Activated T-helper 1 cell treated with anti-CD3 and anti-CD28 coated beads, Interleukin-12 subunit alpha, Interleukin-12 subunit beta, Interleukin-2, Interleukin-4 antibody, amounts not matched to agents 30 ng/mL and 10 ng/mL and 1 ng/mL, durations not matched to agents 14 hours and 24 hours and 36 hours (primary cell): ENCODE measurements at regions of chr6 and their contacts with region 1.

Region 1: GRCh38 chr6:15911753-15912504 is 217.0 kb upstream of the MYLIP start:
- DNase-seq: peak; percentile 15
- H3K4me3 Mint-ChIP-seq: no peak overlapping the region
- H3K27ac Mint-ChIP-seq: peak overlapping the region; percentile 24
- H3K4me1 Mint-ChIP-seq: peaks cover 13% of the 10 kb centered on the region
- H3K27me3 Mint-ChIP-seq: no peaks in the 10 kb centered on the region

Region 2: DNA sequence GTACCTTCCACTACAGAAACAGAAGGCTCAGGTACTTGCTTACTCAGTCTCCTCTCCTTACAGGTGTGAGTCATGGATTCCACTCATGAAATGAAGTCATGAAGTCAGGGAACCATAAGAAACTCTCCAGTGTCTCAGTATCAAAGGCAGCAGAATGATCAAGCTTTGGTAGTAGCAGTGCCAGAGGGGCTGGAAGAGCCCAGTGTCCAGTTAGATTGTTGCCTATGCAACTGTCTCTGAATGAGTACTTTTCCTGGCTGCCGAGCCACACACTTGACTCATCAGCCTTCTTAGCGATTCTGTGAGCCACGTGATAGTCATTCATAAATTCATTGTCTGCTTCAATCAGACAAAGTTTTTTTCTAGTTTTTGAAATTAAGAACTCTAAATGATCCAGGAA is 196.9 kb before region 1 on chr6:
- intact Hi-C with region 1: loop called (anchors 5 kb)
- DNase-seq: no peak
- H3K4me3 Mint-ChIP-seq: no peak overlapping the region
- H3K27ac Mint-ChIP-seq: peak overlapping the region; percentile 45
- H3K4me1 Mint-ChIP-seq: peaks cover 11% of the 10 kb centered on the region
- H3K27me3 Mint-ChIP-seq: no peaks in the 10 kb centered on the region

Region 3: GRCh38 chr6:15796130-15796771 is 115.7 kb before region 1 on chr6:
- intact Hi-C with region 1: no loop called
- DNase-seq: no peak
- H3K4me3 Mint-ChIP-seq: no peak overlapping the region
- H3K27ac Mint-ChIP-seq: no peak overlapping the region
- H3K4me1 Mint-ChIP-seq: no peaks in the 10 kb centered on the region
- H3K27me3 Mint-ChIP-seq: peaks cover 2% of the 10 kb centered on the region

Region 4: DNA sequence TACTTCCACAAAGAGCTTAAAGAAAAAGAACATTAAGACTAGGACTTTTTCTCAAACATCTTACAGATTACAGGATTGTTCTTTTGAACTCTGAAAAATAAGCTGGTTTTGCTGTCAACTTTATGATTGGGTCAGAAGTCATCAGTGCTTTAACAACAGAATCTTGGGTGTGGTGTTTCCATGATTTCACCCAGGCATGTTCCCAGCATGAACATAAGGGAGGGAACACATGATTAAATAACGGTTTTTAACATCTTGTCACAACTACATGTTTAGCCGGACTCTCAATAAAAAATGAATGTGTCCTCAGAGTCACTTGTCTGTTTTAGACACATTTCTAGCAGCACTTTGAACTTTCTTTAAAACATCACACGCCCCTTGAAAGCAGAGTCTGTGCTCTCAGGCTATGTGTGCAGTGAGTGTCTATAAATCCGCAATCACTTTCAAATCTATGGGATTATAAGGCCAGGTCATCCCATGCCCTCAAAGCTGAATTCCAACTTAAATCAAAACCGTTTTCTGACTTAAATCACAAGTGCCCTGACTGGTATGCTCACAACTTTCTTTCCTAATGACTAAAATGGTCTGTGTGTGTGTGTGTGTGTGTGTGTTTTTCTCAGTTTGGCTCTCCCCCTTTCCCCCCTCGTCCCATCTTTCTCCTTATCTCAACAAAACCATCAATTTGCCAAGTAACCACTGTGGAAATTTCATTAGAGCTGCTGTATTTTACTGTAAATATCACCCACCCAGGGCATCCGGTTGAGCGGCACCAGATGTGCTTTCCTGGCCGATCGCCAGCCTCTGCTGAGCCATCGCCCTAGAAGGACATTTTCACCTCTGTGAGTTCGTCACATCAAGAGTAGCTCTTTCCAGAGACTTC is 32.3 kb before region 1 on chr6:
- intact Hi-C with region 1: loop called (anchors 1 kb)
- DNase-seq: no peak
- H3K4me3 Mint-ChIP-seq: peak overlapping the region; percentile 53
- H3K27ac Mint-ChIP-seq: peak overlapping the region; percentile 63
- H3K4me1 Mint-ChIP-seq: peaks cover 34% of the 10 kb centered on the region
- H3K27me3 Mint-ChIP-seq: no peaks in the 10 kb centered on the region

Region 5: GRCh38 chr6:15948930-15949900 is 37.3 kb after region 1 on chr6:
- intact Hi-C with region 1: no loop called
- DNase-seq: no peak
- H3K4me3 Mint-ChIP-seq: no peak overlapping the region
- H3K27ac Mint-ChIP-seq: no peak overlapping the region
- H3K4me1 Mint-ChIP-seq: peaks cover 5% of the 10 kb centered on the region
- H3K27me3 Mint-ChIP-seq: no peaks in the 10 kb centered on the region

Region 6: GRCh38 chr6:15962449-15962764 is 50.5 kb after region 1 on chr6:
- intact Hi-C with region 1: loop called (anchors 1 kb)
- DNase-seq: peak; percentile 16
- H3K4me3 Mint-ChIP-seq: no peak overlapping the region
- H3K27ac Mint-ChIP-seq: peak overlapping the region; percentile 87
- H3K4me1 Mint-ChIP-seq: peaks cover 33% of the 10 kb centered on the region
- H3K27me3 Mint-ChIP-seq: no peaks in the 10 kb centered on the region

Region 7: DNA sequence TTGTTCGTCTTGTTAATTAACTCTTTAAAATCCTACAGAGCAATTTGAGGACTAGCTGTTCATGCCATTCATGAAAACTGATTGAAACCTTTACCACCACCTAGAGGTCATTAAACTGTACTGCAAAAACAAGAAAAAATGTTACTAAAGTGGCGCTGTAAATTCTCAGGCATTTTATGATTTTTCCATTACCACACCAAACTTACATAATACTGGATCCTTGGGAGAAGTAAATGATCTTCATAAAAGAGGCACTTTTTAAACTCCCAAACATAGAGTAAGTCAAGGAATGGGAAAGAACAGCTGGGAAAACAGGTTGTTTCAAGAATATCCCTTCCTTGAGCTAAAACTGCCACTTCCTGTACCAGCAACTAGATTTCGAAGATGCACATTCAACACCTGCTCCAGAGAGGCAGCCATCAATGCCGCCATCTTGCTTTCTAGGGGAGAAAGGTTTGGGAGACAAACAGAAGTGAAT is 271.3 kb after region 1 on chr6:
- intact Hi-C with region 1: loop called (anchors 5 kb)
- DNase-seq: no peak
- H3K4me3 Mint-ChIP-seq: peak overlapping the region; percentile 5
- H3K27ac Mint-ChIP-seq: no peak overlapping the region
- H3K4me1 Mint-ChIP-seq: peaks cover 44% of the 10 kb centered on the region
- H3K27me3 Mint-ChIP-seq: peaks cover 13% of the 10 kb centered on the region